ENCODE measurements at regions of chr11 and their contacts with region 1.

Region 1: GRCh38 chr11:108647701-108648527 is 17.0 kb upstream of the DDX10 start:
- DNase-seq: peak; percentile 67
- ATAC-seq: peak; percentile 96
- H3K4me3 ChIP-seq: no peak overlapping the region
- H3K27ac ChIP-seq: no peak overlapping the region
- H3K4me1 ChIP-seq: no peaks in the 10 kb centered on the region
- H3K27me3 ChIP-seq: no peaks in the 10 kb centered on the region
- CTCF ChIP-seq: peak; percentile 93

Region 2: DNA sequence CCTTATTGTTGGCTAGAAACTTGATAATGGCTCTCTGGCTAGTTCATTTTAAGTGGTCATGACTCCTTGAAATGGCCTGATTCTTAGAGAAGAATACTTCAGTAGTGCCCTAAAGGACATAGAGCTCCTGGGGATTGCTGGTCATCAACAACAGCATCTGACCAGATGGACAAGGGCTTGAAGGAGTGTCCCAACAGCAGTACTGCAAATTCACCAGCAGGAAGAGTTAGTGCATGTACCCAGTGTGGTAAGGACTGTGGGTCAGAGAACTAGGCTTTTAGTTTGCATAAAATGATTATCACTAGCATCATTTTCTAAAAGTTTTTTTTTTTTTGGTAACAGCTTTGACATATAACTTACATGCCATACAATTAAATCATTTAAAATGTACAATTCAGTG is 678.7 kb before region 1 on chr11:
- CTCF ChIA-PET with region 1: no interaction called
- POLR2A ChIA-PET with region 1: interaction called, 10 read pairs
- in situ Hi-C with region 1: no loop called
- intact Hi-C with region 1: no loop called
- DNase-seq: no peak
- ATAC-seq: peak; percentile 83
- H3K4me3 ChIP-seq: no peak overlapping the region
- H3K27ac ChIP-seq: no peak overlapping the region
- H3K4me1 ChIP-seq: no peaks in the 10 kb centered on the region
- H3K27me3 ChIP-seq: no peaks in the 10 kb centered on the region
- CTCF ChIP-seq: no peak

Region 3: GRCh38 chr11:108289699-108290098 is 358.2 kb before region 1 on chr11:
- CTCF ChIA-PET with region 1: no interaction called
- POLR2A ChIA-PET with region 1: no interaction called
- in situ Hi-C with region 1: no loop called
- intact Hi-C with region 1: no loop called
- DNase-seq: no peak
- ATAC-seq: no peak
- H3K4me3 ChIP-seq: no peak overlapping the region
- H3K27ac ChIP-seq: no peak overlapping the region
- H3K4me1 ChIP-seq: no peaks in the 10 kb centered on the region
- H3K27me3 ChIP-seq: no peaks in the 10 kb centered on the region
- CTCF ChIP-seq: no peak

Region 4: GRCh38 chr11:108340970-108341369 is 306.9 kb before region 1 on chr11:
- CTCF ChIA-PET with region 1: interaction called, 5 read pairs
- POLR2A ChIA-PET with region 1: no interaction called
- in situ Hi-C with region 1: no loop called
- intact Hi-C with region 1: loop called (anchors 10 kb)
- DNase-seq: peak; percentile 17
- ATAC-seq: peak; percentile 43; the same call in 1 of the 2 replicates
- H3K4me3 ChIP-seq: no peak overlapping the region
- H3K27ac ChIP-seq: no peak overlapping the region
- H3K4me1 ChIP-seq: no peaks in the 10 kb centered on the region
- H3K27me3 ChIP-seq: no peaks in the 10 kb centered on the region
- CTCF ChIP-seq: no peak

Region 5: DNA sequence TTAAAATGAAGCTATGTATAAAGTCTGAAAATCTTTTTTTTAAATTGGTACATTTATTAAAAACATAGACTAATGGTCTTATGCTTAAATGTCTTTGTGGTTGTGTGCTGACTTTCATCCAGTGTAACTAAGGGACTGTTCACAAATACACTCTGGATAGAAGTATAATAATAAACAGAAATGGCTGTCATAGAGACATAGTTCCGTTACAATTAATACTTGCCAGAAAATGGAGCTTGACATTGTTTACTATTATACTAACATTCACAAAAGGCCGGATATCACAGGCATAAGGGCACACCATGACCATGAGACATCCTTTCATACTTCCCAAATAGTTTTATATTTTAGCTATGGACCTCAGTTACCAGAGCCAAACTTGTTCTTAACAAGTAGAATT is 178.2 kb after region 1 on chr11:
- CTCF ChIA-PET with region 1: no interaction called
- POLR2A ChIA-PET with region 1: no interaction called
- in situ Hi-C with region 1: no loop called
- intact Hi-C with region 1: no loop called
- DNase-seq: no peak
- ATAC-seq: no peak
- H3K4me3 ChIP-seq: no peak overlapping the region
- H3K27ac ChIP-seq: no peak overlapping the region
- H3K4me1 ChIP-seq: no peaks in the 10 kb centered on the region
- H3K27me3 ChIP-seq: no peaks in the 10 kb centered on the region
- CTCF ChIP-seq: no peak

Measured in Panc1 (cell line).